ENCODE measurements at regions of chr13 and their contacts with region 1.

Region 1: GRCh38 chr13:39311619-39312018 is 273.4 kb downstream of the NHLRC3 start:
- DNase-seq: peak in 4 of 5 donors; percentile 24 to 49 (median 36)
- ATAC-seq: peak; percentile 81 to 93 (median 88)
- H3K4me3 ChIP-seq: no peak overlapping the region
- H3K27ac ChIP-seq: peak overlapping the region in 2 of 12 donors; percentile 12 to 30
- H3K4me1 ChIP-seq: peaks cover 0 to 25% (median 12%) of the 10 kb centered on the region in 12 donors
- H3K27me3 ChIP-seq: no peaks in the 10 kb centered on the region
- CTCF ChIP-seq: no peak
- POLR2A ChIP-seq: no peak

Region 2: DNA sequence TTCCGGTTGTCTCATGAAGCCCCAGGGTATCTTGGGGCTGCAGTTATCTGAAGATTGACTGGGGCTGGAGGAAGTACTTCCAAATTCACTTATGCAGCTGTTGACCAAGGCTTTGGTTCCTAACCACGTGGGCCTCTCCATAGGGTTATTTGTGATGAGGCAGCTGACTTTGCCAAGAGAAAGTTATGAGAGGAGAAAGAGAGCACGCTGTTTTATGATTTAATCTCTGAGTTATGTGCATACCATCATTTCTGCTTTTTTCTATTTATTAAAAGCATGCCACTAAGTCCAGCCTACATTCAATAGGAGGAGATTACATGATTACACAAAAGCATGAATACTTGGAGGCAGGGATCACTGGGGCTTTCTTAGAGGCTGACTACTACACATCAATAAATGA is 57.8 kb before region 1 on chr13:
- intact Hi-C with region 1: no loop called
- DNase-seq: no peak
- ATAC-seq: no peak
- H3K4me3 ChIP-seq: no peak overlapping the region
- H3K27ac ChIP-seq: peak overlapping the region in 3 of 12 donors; percentile 2 to 20 (median 7)
- H3K4me1 ChIP-seq: peaks cover 0 to 60% (median 28%) of the 10 kb centered on the region in 12 donors
- H3K27me3 ChIP-seq: no peaks in the 10 kb centered on the region
- CTCF ChIP-seq: no peak
- POLR2A ChIP-seq: no peak

Region 3: GRCh38 chr13:39347926-39348901 is 36.6 kb after region 1 on chr13:
- intact Hi-C with region 1: loop called in 1 of 10 experiments (anchors 5 kb)
- DNase-seq: peak; percentile 57 to 86 (median 71)
- ATAC-seq: peak; percentile 93 to 97 (median 94)
- H3K4me3 ChIP-seq: peak overlapping the region in 3 of 12 donors; percentile 9 to 36 (median 25)
- H3K27ac ChIP-seq: peak overlapping the region in 11 of 12 donors; percentile 4 to 83 (median 63)
- H3K4me1 ChIP-seq: peaks cover 0 to 63% (median 41%) of the 10 kb centered on the region in 12 donors
- H3K27me3 ChIP-seq: no peaks in the 10 kb centered on the region
- CTCF ChIP-seq: peak in 2 of 12 donors; percentile 9 to 24
- POLR2A ChIP-seq: no peak